ENCODE measurements at regions of chr21 and their contacts with region 1.

Region 1: GRCh38 chr21:42107881-42108553 is 36.9 kb downstream of the UMODL1 start:
- DNase-seq: peak; percentile 45 to 87 (median 68)
- ATAC-seq: peak; percentile 99
- H3K4me3 ChIP-seq: peak overlapping the region in 1 of 2 experiments; percentile 28
- H3K4me3 Mint-ChIP-seq: peak overlapping the region; percentile 69
- H3K27ac ChIP-seq: no peak overlapping the region
- H3K27ac Mint-ChIP-seq: peak overlapping the region; percentile 62
- H3K4me1 ChIP-seq: peaks cover 20% of the 10 kb centered on the region
- H3K4me1 Mint-ChIP-seq: peaks cover 9% of the 10 kb centered on the region
- H3K27me3 ChIP-seq: no peaks in the 10 kb centered on the region
- H3K27me3 Mint-ChIP-seq: peaks cover 4% of the 10 kb centered on the region
- CTCF ChIP-seq: peak; percentile 74

Region 2: GRCh38 chr21:41816220-41817165 is 291.5 kb before region 1 on chr21:
- CTCF ChIA-PET with region 1: interaction called, 106 read pairs
- POLR2A ChIA-PET with region 1: no interaction called
- intact Hi-C with region 1: no loop called
- DNase-seq: peak; percentile 31 to 75 (median 55)
- ATAC-seq: peak; percentile 78
- H3K4me3 ChIP-seq: no peak overlapping the region
- H3K4me3 Mint-ChIP-seq: no peak overlapping the region
- H3K27ac ChIP-seq: no peak overlapping the region
- H3K27ac Mint-ChIP-seq: no peak overlapping the region
- H3K4me1 ChIP-seq: peaks cover 6% of the 10 kb centered on the region
- H3K4me1 Mint-ChIP-seq: peaks cover 7% of the 10 kb centered on the region
- H3K27me3 ChIP-seq: no peaks in the 10 kb centered on the region
- H3K27me3 Mint-ChIP-seq: no peaks in the 10 kb centered on the region
- CTCF ChIP-seq: peak; percentile 72

Region 3: GRCh38 chr21:41973861-41974751 is 133.9 kb before region 1 on chr21:
- CTCF ChIA-PET with region 1: interaction called, 10 read pairs
- POLR2A ChIA-PET with region 1: no interaction called
- intact Hi-C with region 1: no loop called
- DNase-seq: peak in 3 of 9 experiments; percentile 10 to 58 (median 30)
- ATAC-seq: no peak
- H3K4me3 ChIP-seq: peak overlapping the region in 1 of 2 experiments; percentile 35
- H3K4me3 Mint-ChIP-seq: peak overlapping the region; percentile 35
- H3K27ac ChIP-seq: no peak overlapping the region
- H3K27ac Mint-ChIP-seq: peak overlapping the region; percentile 57
- H3K4me1 ChIP-seq: peaks cover 15% of the 10 kb centered on the region
- H3K4me1 Mint-ChIP-seq: peaks cover 18% of the 10 kb centered on the region
- H3K27me3 ChIP-seq: no peaks in the 10 kb centered on the region
- H3K27me3 Mint-ChIP-seq: peaks cover 2% of the 10 kb centered on the region
- CTCF ChIP-seq: no peak

Region 4: DNA sequence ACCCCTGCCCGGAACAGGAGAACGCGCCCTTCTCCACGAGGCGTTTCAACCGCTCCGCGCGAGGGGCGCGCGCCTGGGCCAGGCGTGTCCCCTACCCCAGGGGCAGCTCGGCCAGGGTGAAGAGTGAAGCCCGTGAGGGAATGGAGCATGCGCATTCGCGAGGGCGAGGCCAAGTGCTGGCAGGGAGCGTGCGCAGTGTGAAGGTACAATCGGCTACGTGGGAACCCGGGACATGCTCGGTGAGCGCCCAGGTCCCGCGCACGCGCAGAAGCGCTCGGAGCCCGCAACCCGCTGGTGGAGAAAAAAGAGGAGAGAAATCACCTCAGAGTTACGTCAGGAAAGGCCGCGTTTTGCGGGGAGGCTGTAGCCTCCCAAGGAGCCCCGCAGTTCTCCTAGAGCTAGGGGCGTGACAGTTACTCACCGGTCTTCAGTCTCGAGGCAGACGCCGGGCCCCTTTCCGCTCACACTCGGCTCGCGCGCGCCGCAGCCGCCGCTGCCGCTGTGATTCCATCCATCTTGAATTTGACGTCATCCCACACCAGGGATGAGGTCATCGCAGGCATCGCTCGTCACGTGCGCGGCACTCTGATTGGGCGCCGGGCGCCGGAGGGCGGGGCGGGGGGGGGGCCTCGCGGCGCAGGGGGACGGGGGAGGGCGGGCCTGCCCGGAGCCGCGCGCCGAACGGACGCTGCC is 98.0 kb before region 1 on chr21 and contains the start of gene ZBTB21:
- CTCF ChIA-PET with region 1: interaction called, 73 read pairs
- POLR2A ChIA-PET with region 1: interaction called, 26 read pairs
- intact Hi-C with region 1: loop called (anchors 1 kb)
- DNase-seq: peak; percentile 95 to 99 (median 98)
- ATAC-seq: peak; percentile 75
- H3K4me3 ChIP-seq: peak within 1 kb of the TSS; percentile 64 to 95
- H3K4me3 Mint-ChIP-seq: peak within 1 kb of the TSS; percentile 98
- H3K27ac ChIP-seq: peak within 1 kb of the TSS; percentile 96 to 100
- H3K27ac Mint-ChIP-seq: peak within 1 kb of the TSS; percentile 100
- H3K4me1 ChIP-seq: peaks cover 5% of the 10 kb centered on the region
- H3K4me1 Mint-ChIP-seq: peaks cover 38% of the 10 kb centered on the region
- H3K27me3 ChIP-seq: no peaks in the 10 kb centered on the region
- H3K27me3 Mint-ChIP-seq: no peaks in the 10 kb centered on the region
- CTCF ChIP-seq: no peak
- total RNA-seq, gene ZBTB21: 130 to 141 TPM

Region 5: GRCh38 chr21:42089093-42089631 is 18.9 kb before region 1 on chr21:
- CTCF ChIA-PET with region 1: interaction called, 17 read pairs
- POLR2A ChIA-PET with region 1: no interaction called
- intact Hi-C with region 1: no loop called
- DNase-seq: peak in 4 of 9 experiments; percentile 9 to 64 (median 22)
- ATAC-seq: peak; percentile 66
- H3K4me3 ChIP-seq: no peak overlapping the region
- H3K4me3 Mint-ChIP-seq: peak overlapping the region; percentile 49
- H3K27ac ChIP-seq: no peak overlapping the region
- H3K27ac Mint-ChIP-seq: peak overlapping the region; percentile 19
- H3K4me1 ChIP-seq: peaks cover 15% of the 10 kb centered on the region
- H3K4me1 Mint-ChIP-seq: peaks cover 11% of the 10 kb centered on the region
- H3K27me3 ChIP-seq: no peaks in the 10 kb centered on the region
- H3K27me3 Mint-ChIP-seq: no peaks in the 10 kb centered on the region
- CTCF ChIP-seq: no peak

Region 6: DNA sequence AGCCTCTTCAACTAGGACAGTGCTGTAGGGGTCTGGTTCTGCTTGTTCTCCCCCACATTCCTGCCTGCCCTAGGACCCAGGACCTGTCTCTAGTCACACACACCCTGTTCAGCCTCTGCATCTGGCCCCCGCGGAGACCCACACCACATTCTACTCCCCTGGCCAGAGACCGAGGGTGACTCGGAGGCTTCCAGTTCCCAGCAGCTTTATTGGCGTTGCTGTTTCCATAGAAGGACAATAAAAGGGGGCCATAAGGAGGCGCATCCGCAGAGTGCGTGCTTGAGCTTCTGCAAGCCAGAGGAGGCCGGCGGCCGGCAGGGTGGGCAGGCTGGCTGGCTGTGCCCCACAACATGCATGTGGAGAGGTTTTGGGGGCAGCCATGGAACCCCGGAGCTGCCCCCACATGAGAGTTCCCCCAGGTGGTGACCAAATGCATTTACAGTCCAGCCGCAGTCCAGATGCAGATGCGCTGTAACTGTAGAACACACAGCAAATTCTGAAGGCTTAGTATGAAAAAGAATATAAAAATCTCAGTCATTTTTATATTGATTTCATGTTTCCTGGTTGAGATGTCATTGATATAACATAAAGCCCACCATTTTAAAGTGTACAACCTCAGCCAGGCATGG is 597.8 kb after region 1 on chr21:
- CTCF ChIA-PET with region 1: no interaction called
- POLR2A ChIA-PET with region 1: no interaction called
- intact Hi-C with region 1: no loop called
- DNase-seq: no peak
- ATAC-seq: no peak
- H3K4me3 ChIP-seq: no peak overlapping the region
- H3K4me3 Mint-ChIP-seq: no peak overlapping the region
- H3K27ac ChIP-seq: no peak overlapping the region
- H3K27ac Mint-ChIP-seq: no peak overlapping the region
- H3K4me1 ChIP-seq: no peaks in the 10 kb centered on the region
- H3K4me1 Mint-ChIP-seq: no peaks in the 10 kb centered on the region
- H3K27me3 ChIP-seq: no peaks in the 10 kb centered on the region
- H3K27me3 Mint-ChIP-seq: no peaks in the 10 kb centered on the region
- CTCF ChIP-seq: no peak

Region 7: GRCh38 chr21:42777757-42778344 is 669.8 kb after region 1 on chr21:
- CTCF ChIA-PET with region 1: no interaction called
- POLR2A ChIA-PET with region 1: no interaction called
- intact Hi-C with region 1: no loop called
- DNase-seq: peak in 1 of 9 experiments; percentile 16
- ATAC-seq: no peak
- H3K4me3 ChIP-seq: no peak overlapping the region
- H3K4me3 Mint-ChIP-seq: no peak overlapping the region
- H3K27ac ChIP-seq: no peak overlapping the region
- H3K27ac Mint-ChIP-seq: peak overlapping the region; percentile 49
- H3K4me1 ChIP-seq: peaks cover 19% of the 10 kb centered on the region
- H3K4me1 Mint-ChIP-seq: peaks cover 25% of the 10 kb centered on the region
- H3K27me3 ChIP-seq: no peaks in the 10 kb centered on the region
- H3K27me3 Mint-ChIP-seq: no peaks in the 10 kb centered on the region
- CTCF ChIP-seq: no peak

Measured in CD8-positive, alpha-beta T cell (primary cell).